ENCODE measurements at regions of chr12 and their contacts with region 1.

Region 1: GRCh38 chr12:71014180-71014785 is 93.7 kb upstream of the PTPRR start:
- DNase-seq: no peak
- H3K4me3 ChIP-seq: no peak overlapping the region
- H3K27ac ChIP-seq: no peak overlapping the region
- H3K4me1 ChIP-seq: no peaks in the 10 kb centered on the region
- H3K27me3 ChIP-seq: no peaks in the 10 kb centered on the region
- CTCF ChIP-seq: peak; percentile 54 to 66 (median 59)

Region 2: DNA sequence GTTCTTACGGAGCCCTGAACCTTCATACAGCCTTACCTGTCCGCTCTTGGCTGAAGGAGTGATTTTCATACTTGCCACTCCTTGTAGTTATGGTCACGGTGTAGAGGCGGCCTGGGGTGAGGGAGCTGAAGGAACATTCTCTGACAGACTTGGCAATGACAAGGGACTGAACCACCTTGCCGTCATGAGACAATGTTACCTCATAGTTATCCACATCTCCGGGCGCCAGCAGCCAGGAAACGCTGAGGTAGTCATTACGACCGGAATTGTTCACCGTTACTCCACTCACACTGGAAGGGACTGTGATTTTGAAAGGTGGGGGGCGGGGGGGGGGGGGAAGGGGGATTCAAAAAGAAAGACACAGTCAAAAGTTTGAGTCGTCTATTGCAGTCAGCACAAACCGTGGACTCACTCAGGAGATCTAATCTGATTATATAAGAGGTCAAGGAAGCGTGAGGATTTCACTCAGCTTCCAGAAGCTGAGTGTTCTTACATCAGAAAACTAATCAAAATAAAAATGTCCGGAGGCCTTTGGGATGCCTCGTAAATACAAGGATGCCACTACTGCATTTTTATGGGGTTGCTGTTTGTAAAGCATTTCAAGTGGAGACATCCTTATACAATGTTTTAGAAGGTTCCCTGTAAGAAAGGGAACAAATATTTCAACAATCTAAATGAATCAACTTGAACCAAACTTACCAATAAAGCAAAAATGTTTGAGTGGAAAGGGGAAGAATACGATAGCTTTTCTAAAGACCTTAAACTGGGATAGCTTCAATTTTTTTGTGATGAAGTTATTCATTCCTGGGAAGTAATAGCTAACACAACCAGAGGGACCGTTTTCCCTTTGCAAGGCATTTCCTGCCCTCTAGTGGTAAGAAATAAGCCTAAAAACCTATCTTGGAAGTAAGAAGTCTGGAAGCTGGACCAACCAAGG is 437.7 kb before region 1 on chr12:
- intact Hi-C with region 1: loop called (anchors 5 kb)
- DNase-seq: no peak
- H3K4me3 ChIP-seq: no peak overlapping the region
- H3K27ac ChIP-seq: no peak overlapping the region
- H3K4me1 ChIP-seq: peaks cover 0 to 2% of the 10 kb centered on the region in 2 donors
- H3K27me3 ChIP-seq: no peaks in the 10 kb centered on the region
- CTCF ChIP-seq: peak; percentile 54 to 77 (median 70)

Region 3: GRCh38 chr12:70590051-70590450 is 424.2 kb before region 1 on chr12:
- intact Hi-C with region 1: loop called (anchors 2 kb)
- DNase-seq: peak; percentile 14 to 74
- H3K4me3 ChIP-seq: no peak overlapping the region
- H3K27ac ChIP-seq: no peak overlapping the region
- H3K4me1 ChIP-seq: no peaks in the 10 kb centered on the region
- H3K27me3 ChIP-seq: no peaks in the 10 kb centered on the region
- CTCF ChIP-seq: peak; percentile 27 to 78 (median 65)

Region 4: GRCh38 chr12:70733385-70733784 is 280.9 kb before region 1 on chr12:
- intact Hi-C with region 1: loop called (anchors 1 kb)
- DNase-seq: no peak
- H3K4me3 ChIP-seq: no peak overlapping the region
- H3K27ac ChIP-seq: no peak overlapping the region
- H3K4me1 ChIP-seq: no peaks in the 10 kb centered on the region
- H3K27me3 ChIP-seq: no peaks in the 10 kb centered on the region
- CTCF ChIP-seq: peak; percentile 43 to 67 (median 58)

Region 5: DNA sequence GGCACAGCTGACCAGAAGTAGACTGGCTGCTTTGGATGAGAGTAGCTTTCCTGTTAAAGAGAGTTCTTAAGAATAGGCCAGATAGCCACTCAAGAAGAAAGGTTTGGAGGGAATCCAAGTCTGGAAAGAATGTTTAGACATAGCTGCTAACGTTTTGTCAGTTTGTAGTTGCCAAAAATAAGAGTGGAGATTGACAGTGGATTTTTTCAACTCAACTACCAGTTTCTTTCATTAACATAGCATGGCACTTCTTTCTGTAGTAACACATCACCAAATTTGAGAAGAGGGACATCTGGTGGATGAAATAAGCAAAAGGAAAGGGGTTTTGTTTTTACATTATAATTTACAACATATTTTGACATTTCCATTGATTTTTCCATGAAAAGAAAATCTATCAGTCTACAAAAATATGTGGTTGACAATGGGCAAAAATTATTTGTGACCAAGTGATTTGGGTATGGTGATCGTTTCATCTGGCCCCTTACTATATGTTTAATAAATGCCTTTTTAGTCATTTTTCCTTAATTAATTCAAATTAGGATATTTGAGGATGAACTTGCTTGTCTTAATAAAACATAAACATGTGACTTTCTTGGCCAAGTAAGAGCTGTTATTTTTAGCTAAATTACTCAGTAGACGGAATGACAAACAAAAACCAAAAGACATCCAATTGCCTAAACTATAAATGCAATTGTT is 164.9 kb before region 1 on chr12:
- intact Hi-C with region 1: loop called (anchors 5 kb)
- DNase-seq: no peak
- H3K4me3 ChIP-seq: no peak overlapping the region
- H3K27ac ChIP-seq: no peak overlapping the region
- H3K4me1 ChIP-seq: peaks cover 0 to 2% of the 10 kb centered on the region in 2 donors
- H3K27me3 ChIP-seq: no peaks in the 10 kb centered on the region
- CTCF ChIP-seq: peak in 2 of 3 experiments; percentile 26 to 39

Region 6: DNA sequence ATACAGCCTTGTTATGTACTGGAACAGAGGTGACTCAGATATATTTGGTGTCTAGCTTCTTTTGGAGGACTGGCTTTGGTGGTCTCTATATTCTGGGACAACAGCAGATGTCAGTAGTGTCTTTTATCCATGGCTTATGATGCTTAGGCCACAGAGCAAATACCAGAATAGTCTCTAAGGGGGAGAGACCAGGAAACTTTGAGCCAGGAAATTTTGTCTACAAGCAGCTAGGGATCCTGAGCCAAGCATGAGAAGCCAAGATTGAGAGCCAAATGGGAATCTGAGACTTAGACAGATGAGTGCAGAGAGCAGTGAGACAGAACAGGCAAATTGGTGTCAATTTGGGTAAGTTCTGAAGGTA is 65.3 kb before region 1 on chr12:
- intact Hi-C with region 1: loop called (anchors 5 kb)
- DNase-seq: no peak
- H3K4me3 ChIP-seq: no peak overlapping the region
- H3K27ac ChIP-seq: no peak overlapping the region
- H3K4me1 ChIP-seq: no peaks in the 10 kb centered on the region
- H3K27me3 ChIP-seq: no peaks in the 10 kb centered on the region
- CTCF ChIP-seq: no peak